Panc1 (cell line): ENCODE measurements at regions of chr11 and their contacts with region 1.

Region 1: GRCh38 chr11:74123008-74123448 is 47.8 kb downstream of the C2CD3 start:
- DNase-seq: no peak
- ATAC-seq: no peak
- H3K4me3 ChIP-seq: no peak overlapping the region
- H3K27ac ChIP-seq: no peak overlapping the region
- H3K4me1 ChIP-seq: no peaks in the 10 kb centered on the region
- H3K27me3 ChIP-seq: no peaks in the 10 kb centered on the region
- CTCF ChIP-seq: no peak

Region 2: DNA sequence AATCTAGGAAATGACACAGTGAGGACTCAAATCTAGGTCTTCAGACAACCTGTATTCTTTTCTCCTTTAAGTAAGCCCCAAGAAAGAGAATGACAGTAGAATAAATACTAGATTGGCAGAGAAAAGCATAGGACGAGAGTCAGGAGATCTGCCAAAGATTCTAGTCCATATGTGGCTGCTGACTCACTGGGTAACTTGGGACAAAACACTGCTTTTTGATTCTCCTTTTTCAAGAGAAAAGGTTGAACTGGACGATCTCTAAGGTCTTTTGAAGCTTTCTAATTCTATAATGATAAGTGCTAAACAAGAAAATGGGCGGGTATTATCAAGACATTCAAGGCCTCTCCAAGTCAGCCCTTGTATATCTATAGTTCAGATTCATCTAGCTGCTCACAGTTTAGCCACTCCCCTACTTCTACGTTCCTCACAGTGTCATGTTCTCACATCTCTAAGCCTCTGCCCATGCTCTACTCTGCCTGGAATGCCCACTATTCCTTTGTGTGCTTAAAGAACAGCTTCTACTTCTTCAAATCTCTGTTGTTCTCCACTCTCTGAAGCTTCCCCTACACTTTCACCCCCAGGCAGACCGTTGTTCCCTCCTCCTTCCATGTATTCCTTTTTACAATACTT is 693.8 kb before region 1 on chr11:
- CTCF ChIA-PET with region 1: interaction called, 14 read pairs
- POLR2A ChIA-PET with region 1: no interaction called
- in situ Hi-C with region 1: no loop called
- intact Hi-C with region 1: no loop called
- DNase-seq: no peak
- ATAC-seq: no peak
- H3K4me3 ChIP-seq: no peak overlapping the region
- H3K27ac ChIP-seq: no peak overlapping the region
- H3K4me1 ChIP-seq: no peaks in the 10 kb centered on the region
- H3K27me3 ChIP-seq: no peaks in the 10 kb centered on the region
- CTCF ChIP-seq: no peak

Region 3: GRCh38 chr11:74018331-74019005 is 104.6 kb before region 1 on chr11:
- CTCF ChIA-PET with region 1: no interaction called
- POLR2A ChIA-PET with region 1: no interaction called
- in situ Hi-C with region 1: no loop called
- intact Hi-C with region 1: no loop called
- DNase-seq: no peak
- ATAC-seq: no peak
- H3K4me3 ChIP-seq: no peak overlapping the region
- H3K27ac ChIP-seq: no peak overlapping the region
- H3K4me1 ChIP-seq: no peaks in the 10 kb centered on the region
- H3K27me3 ChIP-seq: no peaks in the 10 kb centered on the region
- CTCF ChIP-seq: no peak